ENCODE measurements at regions of chrX and their contacts with region 1.

Region 1: GRCh38 chrX:109709129-109709631 is 23.9 kb downstream of the ACSL4 start:
- DNase-seq: peak in 2 of 3 donors; percentile 59 to 70
- H3K4me3 ChIP-seq: peak overlapping the region in 2 of 7 experiments; percentile 44 to 58
- H3K27ac ChIP-seq: peak overlapping the region in 1 of 2 experiments; percentile 36
- H3K4me1 ChIP-seq: peaks cover 19 to 36% (median 26%) of the 10 kb centered on the region in 4 experiments
- H3K27me3 ChIP-seq: no peaks in the 10 kb centered on the region

Region 2: GRCh38 chrX:109840585-109840984 is 131.4 kb after region 1 on chrX:
- CTCF ChIA-PET with region 1: interaction called, 18 read pairs
- POLR2A ChIA-PET with region 1: no interaction called
- DNase-seq: peak; percentile 79 to 89 (median 89)
- H3K4me3 ChIP-seq: peak overlapping the region in 3 of 7 experiments; percentile 21 to 48 (median 26)
- H3K27ac ChIP-seq: peak overlapping the region in 1 of 2 experiments; percentile 22
- H3K4me1 ChIP-seq: peaks cover 4 to 32% (median 20%) of the 10 kb centered on the region in 4 experiments
- H3K27me3 ChIP-seq: peaks cover 0 to 3% (median 0%) of the 10 kb centered on the region in 5 experiments

Region 3: DNA sequence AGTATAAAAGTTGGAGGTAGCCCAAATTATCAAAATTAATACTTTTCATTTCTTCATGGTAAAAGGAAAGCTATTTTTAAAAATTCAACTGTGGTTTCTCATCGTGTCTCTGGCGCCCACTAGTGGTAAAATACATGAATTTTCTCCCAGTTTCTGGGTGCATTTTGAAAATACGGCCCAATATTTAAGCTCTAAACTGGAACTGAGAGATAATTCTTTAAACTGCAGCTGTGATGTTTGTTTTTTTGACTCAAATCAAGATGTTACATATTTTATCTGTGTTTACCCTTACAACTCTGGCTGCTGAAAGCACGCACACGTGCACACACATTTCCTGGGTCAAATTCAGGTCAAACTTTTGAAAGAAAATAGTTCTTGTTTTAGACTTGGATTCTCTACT is 147.8 kb after region 1 on chrX:
- CTCF ChIA-PET with region 1: interaction called, 114 read pairs
- POLR2A ChIA-PET with region 1: no interaction called
- DNase-seq: peak; percentile 29 to 71 (median 66)
- H3K4me3 ChIP-seq: no peak overlapping the region
- H3K27ac ChIP-seq: no peak overlapping the region
- H3K4me1 ChIP-seq: peaks cover 0 to 2% (median 0%) of the 10 kb centered on the region in 4 experiments
- H3K27me3 ChIP-seq: no peaks in the 10 kb centered on the region

Region 4: DNA sequence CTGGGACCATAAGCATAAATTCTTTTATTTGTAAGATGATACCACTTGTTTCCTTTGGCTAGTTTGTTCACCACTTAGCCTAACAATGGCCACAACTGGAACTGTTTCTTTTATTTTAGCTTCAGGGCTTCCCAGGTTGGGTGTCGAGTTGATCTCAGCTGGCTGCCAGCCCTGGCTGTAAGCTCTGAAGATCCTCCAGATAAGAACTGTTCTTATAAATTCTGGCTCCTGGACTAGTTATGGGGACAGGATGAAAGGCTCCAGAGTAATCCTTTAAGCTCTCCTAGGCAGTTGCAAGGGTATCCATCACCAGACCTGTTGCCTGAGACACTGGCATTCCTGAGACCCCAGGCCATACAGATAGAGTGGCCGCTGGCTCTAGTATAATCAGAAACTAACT is 153.3 kb after region 1 on chrX:
- CTCF ChIA-PET with region 1: interaction called, 114 read pairs
- POLR2A ChIA-PET with region 1: no interaction called
- DNase-seq: no peak
- H3K4me3 ChIP-seq: no peak overlapping the region
- H3K27ac ChIP-seq: no peak overlapping the region
- H3K4me1 ChIP-seq: no peaks in the 10 kb centered on the region
- H3K27me3 ChIP-seq: no peaks in the 10 kb centered on the region

Region 5: DNA sequence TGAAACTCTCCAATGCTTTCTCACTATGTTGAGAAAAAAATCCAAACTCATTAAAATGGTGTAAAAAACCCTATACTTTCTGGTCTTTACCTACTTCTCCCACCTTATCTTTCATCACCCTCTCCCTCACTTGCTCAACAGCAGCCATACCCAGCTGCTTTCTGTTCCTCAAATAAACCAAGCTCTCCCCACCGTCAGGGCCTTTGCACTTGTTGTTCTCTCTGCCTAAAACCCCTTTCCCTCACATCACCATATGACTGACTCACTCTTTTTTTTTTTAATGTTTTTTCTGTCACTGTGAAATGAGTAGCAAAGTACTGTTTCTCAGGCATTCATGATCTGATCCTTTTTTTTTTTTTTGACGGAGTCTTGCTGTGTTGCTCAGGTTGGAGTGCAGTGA is 171.4 kb after region 1 on chrX:
- CTCF ChIA-PET with region 1: interaction called, 11 read pairs
- POLR2A ChIA-PET with region 1: no interaction called
- DNase-seq: peak in 2 of 3 donors; percentile 44 to 53
- H3K4me3 ChIP-seq: no peak overlapping the region
- H3K27ac ChIP-seq: no peak overlapping the region
- H3K4me1 ChIP-seq: peaks cover 3 to 9% (median 8%) of the 10 kb centered on the region in 4 experiments
- H3K27me3 ChIP-seq: no peaks in the 10 kb centered on the region

Region 6: DNA sequence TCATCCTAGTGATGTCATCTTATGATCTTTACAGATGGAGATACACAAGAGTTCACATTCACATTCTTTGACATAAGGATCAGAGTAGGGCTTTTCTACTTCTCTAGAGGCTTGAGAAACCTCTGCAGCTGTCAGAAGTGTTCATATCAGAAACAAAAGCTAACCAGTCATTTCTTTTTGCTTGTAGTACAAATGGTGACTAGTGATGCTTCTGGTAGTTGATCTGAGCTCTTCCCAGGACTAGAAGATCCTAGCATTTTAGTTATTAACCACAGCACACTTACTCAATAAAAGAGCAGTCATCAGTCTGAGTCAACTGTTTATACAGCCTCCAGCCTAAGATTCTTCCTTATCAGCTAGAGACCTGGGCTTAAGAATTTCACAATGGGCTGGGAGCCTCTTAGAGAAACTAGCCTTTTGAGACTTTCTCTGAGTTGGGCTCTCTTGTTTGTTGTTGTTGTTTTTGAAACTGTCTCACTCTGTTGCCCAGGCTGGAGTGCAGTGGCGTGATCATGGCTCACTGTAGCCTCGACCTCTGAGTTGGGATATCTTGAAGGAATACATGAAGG is 377.8 kb after region 1 on chrX:
- CTCF ChIA-PET with region 1: no interaction called
- POLR2A ChIA-PET with region 1: no interaction called
- DNase-seq: peak in 2 of 3 donors; percentile 34 to 42
- H3K4me3 ChIP-seq: no peak overlapping the region
- H3K27ac ChIP-seq: no peak overlapping the region
- H3K4me1 ChIP-seq: peaks cover 17 to 48% (median 25%) of the 10 kb centered on the region in 4 experiments
- H3K27me3 ChIP-seq: no peaks in the 10 kb centered on the region